ENCODE measurements at regions of chr5 and their contacts with region 1.

Region 1: GRCh38 chr5:150560401-150561193 is 52.7 kb downstream of the NDST1 start:
- DNase-seq: peak; percentile 36
- ATAC-seq: peak; percentile 98
- H3K4me3 Mint-ChIP-seq: no peak overlapping the region
- H3K27ac Mint-ChIP-seq: no peak overlapping the region
- H3K4me1 Mint-ChIP-seq: peaks cover 7% of the 10 kb centered on the region
- H3K27me3 Mint-ChIP-seq: no peaks in the 10 kb centered on the region
- CTCF ChIP-seq: peak; percentile 44

Region 2: GRCh38 chr5:150517272-150518152 is 43.1 kb before region 1 on chr5:
- CTCF ChIA-PET with region 1: no interaction called
- POLR2A ChIA-PET with region 1: no interaction called
- intact Hi-C with region 1: no loop called
- DNase-seq: no peak
- ATAC-seq: no peak
- H3K4me3 Mint-ChIP-seq: no peak overlapping the region
- H3K27ac Mint-ChIP-seq: no peak overlapping the region
- H3K4me1 Mint-ChIP-seq: peaks cover 2% of the 10 kb centered on the region
- H3K27me3 Mint-ChIP-seq: no peaks in the 10 kb centered on the region
- CTCF ChIP-seq: no peak

Region 3: GRCh38 chr5:150624334-150625163 is 64.0 kb after region 1 on chr5:
- CTCF ChIA-PET with region 1: interaction called, 9 read pairs
- POLR2A ChIA-PET with region 1: no interaction called
- intact Hi-C with region 1: loop called (anchors 2 kb)
- DNase-seq: peak; percentile 44
- ATAC-seq: peak; percentile 23
- H3K4me3 Mint-ChIP-seq: peak overlapping the region; percentile 94
- H3K27ac Mint-ChIP-seq: peak overlapping the region; percentile 76
- H3K4me1 Mint-ChIP-seq: peaks cover 57% of the 10 kb centered on the region
- H3K27me3 Mint-ChIP-seq: no peaks in the 10 kb centered on the region
- CTCF ChIP-seq: no peak

Region 4: GRCh38 chr5:150656191-150657132 is 95.9 kb after region 1 on chr5:
- CTCF ChIA-PET with region 1: interaction called, 122 read pairs
- POLR2A ChIA-PET with region 1: interaction called, 6 read pairs
- intact Hi-C with region 1: loop called (anchors 1 kb)
- DNase-seq: peak; percentile 84
- ATAC-seq: peak; percentile 93
- H3K4me3 Mint-ChIP-seq: peak overlapping the region; percentile 81
- H3K27ac Mint-ChIP-seq: no peak overlapping the region
- H3K4me1 Mint-ChIP-seq: peaks cover 16% of the 10 kb centered on the region
- H3K27me3 Mint-ChIP-seq: no peaks in the 10 kb centered on the region
- CTCF ChIP-seq: peak; percentile 23

Region 5: GRCh38 chr5:150710165-150710564 is 149.6 kb after region 1 on chr5:
- CTCF ChIA-PET with region 1: interaction called, 14 read pairs
- POLR2A ChIA-PET with region 1: no interaction called
- intact Hi-C with region 1: loop called (anchors 1 kb)
- DNase-seq: no peak
- ATAC-seq: no peak
- H3K4me3 Mint-ChIP-seq: no peak overlapping the region
- H3K27ac Mint-ChIP-seq: no peak overlapping the region
- H3K4me1 Mint-ChIP-seq: no peaks in the 10 kb centered on the region
- H3K27me3 Mint-ChIP-seq: no peaks in the 10 kb centered on the region
- CTCF ChIP-seq: no peak

Region 6: GRCh38 chr5:150778517-150779396 is 218.2 kb after region 1 on chr5 and contains the start of gene SMIM3:
- CTCF ChIA-PET with region 1: interaction called, 7 read pairs
- POLR2A ChIA-PET with region 1: no interaction called
- intact Hi-C with region 1: loop called (anchors 5 kb)
- DNase-seq: no peak
- ATAC-seq: peak; percentile 27
- H3K4me3 Mint-ChIP-seq: peak within 1 kb of the TSS; percentile 79
- H3K27ac Mint-ChIP-seq: no peak within 1 kb of the TSS
- H3K4me1 Mint-ChIP-seq: peaks cover 33% of the 10 kb centered on the region
- H3K27me3 Mint-ChIP-seq: peaks cover 43% of the 10 kb centered on the region
- CTCF ChIP-seq: no peak
- total RNA-seq, gene SMIM3: 0.22 TPM in 1 of 2 replicates, not detected in the other

Region 7: DNA sequence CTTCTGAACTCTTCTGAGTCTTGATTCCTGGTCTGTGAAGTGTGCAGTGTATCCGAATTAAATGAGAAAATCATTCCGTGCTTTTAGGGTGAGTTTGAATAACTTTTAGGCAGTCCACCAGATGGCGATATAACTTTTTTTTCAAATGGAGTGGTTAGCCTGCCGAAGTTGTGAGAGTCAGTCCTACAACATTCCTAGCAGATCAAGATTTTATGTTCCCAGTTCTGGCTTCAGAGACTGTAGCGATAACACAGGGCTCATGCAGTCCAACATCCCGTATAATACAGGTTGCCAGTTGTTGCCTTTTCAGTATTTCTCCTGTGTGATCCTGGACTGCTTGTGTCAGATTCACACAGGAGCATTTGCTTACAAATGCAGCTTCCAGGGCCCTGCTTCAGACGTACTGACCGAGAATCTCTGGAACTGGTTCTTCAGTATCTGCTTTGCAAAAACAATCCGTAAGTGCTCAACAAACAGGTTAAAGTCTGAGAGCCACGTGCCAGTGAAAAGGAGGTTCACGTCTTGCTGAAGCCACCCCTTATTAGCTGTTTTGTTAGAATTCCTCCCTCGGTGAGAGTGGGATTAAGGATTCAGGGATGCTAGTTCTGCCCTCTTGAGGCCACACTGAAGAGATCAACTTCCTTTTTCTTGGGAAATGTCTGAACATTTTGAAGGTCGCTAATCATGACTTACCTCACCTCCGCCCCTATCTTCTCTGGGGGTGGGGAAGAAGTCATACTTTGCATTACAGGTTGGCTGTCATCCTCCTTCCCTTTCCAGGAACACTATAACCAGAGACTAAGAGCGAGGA is 240.7 kb after region 1 on chr5:
- CTCF ChIA-PET with region 1: no interaction called
- POLR2A ChIA-PET with region 1: no interaction called
- intact Hi-C with region 1: no loop called
- DNase-seq: no peak
- ATAC-seq: no peak
- H3K4me3 Mint-ChIP-seq: no peak overlapping the region
- H3K27ac Mint-ChIP-seq: no peak overlapping the region
- H3K4me1 Mint-ChIP-seq: no peaks in the 10 kb centered on the region
- H3K27me3 Mint-ChIP-seq: peaks cover 18% of the 10 kb centered on the region
- CTCF ChIP-seq: no peak

Region 8: GRCh38 chr5:150846654-150847333 is 286.2 kb after region 1 on chr5:
- CTCF ChIA-PET with region 1: interaction called, 40 read pairs
- POLR2A ChIA-PET with region 1: interaction called, 3 read pairs
- intact Hi-C with region 1: loop called (anchors 1 kb)
- DNase-seq: no peak
- ATAC-seq: peak; percentile 96
- H3K4me3 Mint-ChIP-seq: peak overlapping the region; percentile 81
- H3K27ac Mint-ChIP-seq: peak overlapping the region; percentile 55
- H3K4me1 Mint-ChIP-seq: peaks cover 10% of the 10 kb centered on the region
- H3K27me3 Mint-ChIP-seq: no peaks in the 10 kb centered on the region
- CTCF ChIP-seq: no peak

Region 9: GRCh38 chr5:150948527-150948926 is 387.9 kb after region 1 on chr5:
- CTCF ChIA-PET with region 1: no interaction called
- POLR2A ChIA-PET with region 1: no interaction called
- intact Hi-C with region 1: no loop called
- DNase-seq: no peak
- ATAC-seq: no peak
- H3K4me3 Mint-ChIP-seq: no peak overlapping the region
- H3K27ac Mint-ChIP-seq: no peak overlapping the region
- H3K4me1 Mint-ChIP-seq: no peaks in the 10 kb centered on the region
- H3K27me3 Mint-ChIP-seq: peaks cover 17% of the 10 kb centered on the region
- CTCF ChIP-seq: no peak

Measured in activated B cell treated with CpG ODN at 0.5 μM for 24 hours (primary cell).